Right cardiac atrium (tissue), 5 donors: ENCODE measurements at regions of chr16 and their contacts with region 1.

Region 1: GRCh38 chr16:27235055-27235937 is 32.0 kb downstream of the KDM8 start:
- DNase-seq: peak; percentile 93 to 95 (median 94)
- ATAC-seq: peak; percentile 70 to 85
- H3K4me3 ChIP-seq: no peak overlapping the region
- H3K27ac ChIP-seq: peak overlapping the region; percentile 81
- H3K4me1 ChIP-seq: peaks cover 14% of the 10 kb centered on the region
- H3K27me3 ChIP-seq: no peaks in the 10 kb centered on the region

Region 2: GRCh38 chr16:27268376-27269299 is 33.3 kb after region 1 on chr16 and contains the start of gene NSMCE1:
- intact Hi-C with region 1: loop called in 1 of 4 experiments (anchors 5 kb)
- DNase-seq: peak; percentile 99
- ATAC-seq: peak; percentile 99
- H3K4me3 ChIP-seq: peak within 1 kb of the TSS; percentile 64
- H3K27ac ChIP-seq: peak within 1 kb of the TSS; percentile 80
- H3K4me1 ChIP-seq: peaks cover 6% of the 10 kb centered on the region
- H3K27me3 ChIP-seq: no peaks in the 10 kb centered on the region
- total RNA-seq, gene NSMCE1: 27.3 to 36.8 (median 29.3) TPM

Region 3: GRCh38 chr16:27313422-27314160 is 78.3 kb after region 1 on chr16 and contains the start of gene IL4R:
- intact Hi-C with region 1: loop called in 1 of 4 experiments (anchors 10 kb)
- DNase-seq: peak; percentile 90 to 94 (median 90)
- ATAC-seq: peak; percentile 33 to 59
- H3K4me3 ChIP-seq: peak within 1 kb of the TSS; percentile 87
- H3K27ac ChIP-seq: peak within 1 kb of the TSS; percentile 77
- H3K4me1 ChIP-seq: peaks cover 16% of the 10 kb centered on the region
- H3K27me3 ChIP-seq: no peaks in the 10 kb centered on the region
- total RNA-seq, gene IL4R: 19.9 to 51.0 (median 25.7) TPM

Region 4: GRCh38 chr16:27367461-27368357 is 132.4 kb after region 1 on chr16:
- intact Hi-C with region 1: loop called in 3 of 4 experiments (anchors 2 to 10 kb)
- DNase-seq: peak; percentile 89 to 94 (median 92)
- ATAC-seq: peak; percentile 83 to 84
- H3K4me3 ChIP-seq: no peak overlapping the region
- H3K27ac ChIP-seq: peak overlapping the region; percentile 19
- H3K4me1 ChIP-seq: peaks cover 4% of the 10 kb centered on the region
- H3K27me3 ChIP-seq: no peaks in the 10 kb centered on the region

Region 5: DNA sequence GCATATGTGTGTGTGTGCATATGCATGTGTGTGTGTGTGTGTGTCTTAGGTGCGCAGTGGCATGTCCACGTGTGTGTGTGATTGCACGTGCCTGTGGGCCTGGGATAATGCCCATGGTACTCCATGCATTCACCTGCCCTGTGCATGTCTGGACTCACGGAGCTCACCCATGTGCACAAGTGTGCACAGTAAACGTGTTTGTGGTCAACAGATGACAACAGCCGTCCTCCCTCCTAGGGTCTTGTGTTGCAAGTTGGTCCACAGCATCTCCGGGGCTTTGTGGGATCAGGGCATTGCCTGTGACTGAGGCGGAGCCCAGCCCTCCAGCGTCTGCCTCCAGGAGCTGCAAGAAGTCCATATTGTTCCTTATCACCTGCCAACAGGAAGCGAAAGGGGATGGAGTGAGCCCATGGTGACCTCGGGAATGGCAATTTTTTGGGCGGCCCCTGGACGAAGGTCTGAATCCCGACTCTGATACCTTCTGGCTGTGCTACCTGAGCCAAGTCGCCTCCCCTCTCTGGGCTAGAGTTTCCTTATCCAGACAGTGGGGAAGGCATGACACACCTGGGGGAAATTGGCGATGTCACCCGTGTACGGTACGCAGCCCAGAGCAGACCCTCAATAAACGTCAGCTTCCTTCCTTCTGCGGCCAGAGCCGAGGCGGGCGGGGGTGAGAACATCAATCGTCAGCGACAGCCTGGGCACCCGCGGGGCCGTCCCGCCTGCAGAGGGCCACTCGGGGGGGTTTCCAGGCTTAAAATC is 214.3 kb after region 1 on chr16:
- intact Hi-C with region 1: loop called in 2 of 4 experiments (anchors 10 kb)
- DNase-seq: peak in 1 of 3 donors; percentile 39
- ATAC-seq: peak in 1 of 2 donors; percentile 28
- H3K4me3 ChIP-seq: no peak overlapping the region
- H3K27ac ChIP-seq: no peak overlapping the region
- H3K4me1 ChIP-seq: no peaks in the 10 kb centered on the region
- H3K27me3 ChIP-seq: no peaks in the 10 kb centered on the region

Region 6: GRCh38 chr16:27549859-27550581 is 314.7 kb after region 1 on chr16 and contains the starts of genes GTF3C1 and KATNIP:
- intact Hi-C with region 1: no loop called
- DNase-seq: peak; percentile 100
- ATAC-seq: peak; percentile 99
- H3K4me3 ChIP-seq: peak within 1 kb of the TSS; percentile 95
- H3K27ac ChIP-seq: peak within 1 kb of the TSS; percentile 83
- H3K4me1 ChIP-seq: peaks cover 6% of the 10 kb centered on the region
- H3K27me3 ChIP-seq: no peaks in the 10 kb centered on the region
- total RNA-seq, gene GTF3C1: 49.8 to 58.6 (median 57.4) TPM
- total RNA-seq, gene KATNIP: 10.0 to 13.4 (median 12.3) TPM